MCF 10A (cell line): ENCODE measurements at regions of chr11 and their contacts with region 1.

Region 1: GRCh38 chr11:60970369-60970774 is 1.1 kb upstream of the CD6 start:
- DNase-seq: peak; percentile 54
- H3K4me3 Mint-ChIP-seq: no peak overlapping the region
- H3K27ac Mint-ChIP-seq: no peak overlapping the region
- H3K4me1 Mint-ChIP-seq: no peaks in the 10 kb centered on the region
- H3K27me3 Mint-ChIP-seq: no peaks in the 10 kb centered on the region
- CTCF ChIP-seq: peak; percentile 73

Region 2: DNA sequence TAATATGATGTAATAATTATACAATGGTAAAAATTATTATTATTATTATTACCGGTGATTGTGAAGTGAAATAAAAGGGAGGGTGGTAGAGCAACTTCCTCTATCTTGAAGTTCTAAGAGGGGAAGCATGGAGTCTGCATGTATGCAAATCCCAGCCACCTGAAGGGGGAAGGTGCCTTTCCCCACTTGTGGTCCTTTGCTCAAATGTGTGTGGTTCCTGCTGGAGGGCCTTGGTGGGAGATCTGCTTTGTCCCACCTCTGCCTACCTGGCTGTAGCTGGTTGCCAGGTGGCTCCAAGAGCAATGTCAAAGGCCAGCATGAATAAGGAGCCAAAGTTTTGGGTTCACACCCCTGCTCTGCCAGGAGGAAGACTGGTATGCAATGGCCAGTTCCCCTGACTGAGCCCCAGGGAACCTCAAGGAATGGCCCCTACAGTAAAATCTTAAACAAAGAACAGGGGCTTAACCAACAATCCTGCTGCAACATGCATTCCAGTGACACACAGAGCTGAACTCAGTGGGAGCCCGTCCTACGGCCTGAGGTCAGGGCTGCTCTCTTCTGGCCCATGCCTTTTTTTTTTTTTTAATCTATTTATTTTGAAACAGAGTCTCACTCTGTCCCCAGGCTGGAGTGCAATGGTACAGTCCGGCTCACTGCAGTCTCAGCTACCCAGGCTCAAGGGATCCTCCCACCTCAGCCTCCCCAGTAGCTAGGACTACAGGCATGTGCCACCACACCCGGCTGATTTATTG is 37.6 kb before region 1 on chr11:
- CTCF ChIA-PET with region 1: no interaction called
- POLR2A ChIA-PET with region 1: no interaction called
- intact Hi-C with region 1: no loop called
- DNase-seq: no peak
- H3K4me3 Mint-ChIP-seq: no peak overlapping the region
- H3K27ac Mint-ChIP-seq: no peak overlapping the region
- H3K4me1 Mint-ChIP-seq: no peaks in the 10 kb centered on the region
- H3K27me3 Mint-ChIP-seq: no peaks in the 10 kb centered on the region
- CTCF ChIP-seq: no peak

Region 3: GRCh38 chr11:61187505-61188130 is 217.2 kb after region 1 on chr11:
- CTCF ChIA-PET with region 1: interaction called, 8 read pairs
- POLR2A ChIA-PET with region 1: no interaction called
- intact Hi-C with region 1: loop called (anchors 1 kb)
- DNase-seq: peak; percentile 73
- H3K4me3 Mint-ChIP-seq: no peak overlapping the region
- H3K27ac Mint-ChIP-seq: no peak overlapping the region
- H3K4me1 Mint-ChIP-seq: no peaks in the 10 kb centered on the region
- H3K27me3 Mint-ChIP-seq: no peaks in the 10 kb centered on the region
- CTCF ChIP-seq: peak; percentile 88